Posterior vena cava (tissue), 2 donors: ENCODE measurements at regions of chr7 and their contacts with region 1.

Region 1: DNA sequence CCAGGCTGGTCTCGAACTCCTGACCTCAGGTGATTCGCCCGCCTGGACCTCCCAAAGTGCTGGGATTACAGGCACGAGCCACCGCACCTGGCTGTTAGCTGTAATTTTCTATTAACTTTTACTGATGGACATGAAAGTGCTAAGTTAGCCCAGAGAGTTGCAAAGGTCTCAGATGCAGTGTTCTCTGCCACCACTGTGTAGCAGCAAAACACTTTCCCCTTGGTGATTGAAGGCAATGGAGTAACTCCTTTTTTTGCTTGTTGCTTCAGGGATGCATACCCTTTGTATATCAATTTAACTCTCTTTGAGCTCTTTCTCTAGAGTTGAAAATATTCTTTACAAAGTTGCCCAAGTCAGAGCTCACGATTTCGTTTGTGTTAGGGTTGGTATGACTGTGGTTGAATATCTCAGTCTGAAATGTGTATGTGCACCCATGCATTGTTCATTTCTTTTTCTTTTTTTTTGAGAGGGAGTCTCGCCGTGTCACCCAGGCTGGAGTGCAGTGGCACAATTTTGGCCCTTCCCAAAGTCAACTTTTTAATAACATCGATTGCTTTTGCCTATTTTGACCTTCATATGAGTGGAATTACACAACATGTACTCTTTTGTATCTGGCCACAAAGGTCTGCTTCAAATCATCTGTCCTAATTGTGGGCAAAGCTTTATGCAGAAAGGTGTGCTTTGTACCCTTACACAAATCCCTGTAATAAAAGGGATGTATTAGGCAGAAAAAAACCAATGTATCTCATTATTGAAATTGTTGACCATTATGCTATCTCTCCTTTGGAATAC is 52.6 kb downstream of the GTF2I start:
- DNase-seq: no peak

Region 2: DNA sequence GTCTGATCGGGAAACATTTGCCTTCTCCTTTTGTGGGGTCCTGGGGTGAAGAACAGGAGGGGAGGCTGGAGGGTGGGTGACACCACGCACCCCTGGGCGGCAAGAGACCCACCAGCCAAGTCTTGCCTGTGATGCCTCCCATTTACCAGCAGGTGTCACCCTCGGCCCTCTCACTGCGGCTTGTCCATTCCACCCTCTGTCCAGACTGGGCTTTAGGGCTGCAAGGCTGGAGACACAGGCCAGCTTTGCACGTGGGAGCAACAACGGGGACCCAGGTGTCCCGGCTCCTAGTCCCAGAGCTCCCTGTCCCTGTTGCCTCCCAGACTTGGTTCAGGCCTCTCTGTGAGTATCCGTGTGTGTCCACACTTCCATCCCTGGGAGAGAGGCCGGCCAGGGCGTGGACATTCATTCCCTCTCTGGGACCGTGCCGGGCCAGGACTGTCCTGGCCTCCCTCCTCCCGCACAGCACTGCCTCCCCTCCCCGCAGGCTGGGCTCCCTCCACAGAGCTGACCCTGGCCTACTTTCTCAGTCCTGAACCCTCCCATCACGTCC is 292.6 kb before region 1 on chr7:
- intact Hi-C with region 1: loop called in 1 of 2 experiments (anchors 10 kb)
- DNase-seq: peak; percentile 89